Activated CD4-positive, alpha-beta T cell treated with anti-CD3 and anti-CD28 coated beads, Interleukin-2, amount 10 ng/mL, durations not matched to agents 7 days and 5 days (primary cell): ENCODE measurements at regions of chr17 and their contacts with region 1.

Region 1: DNA sequence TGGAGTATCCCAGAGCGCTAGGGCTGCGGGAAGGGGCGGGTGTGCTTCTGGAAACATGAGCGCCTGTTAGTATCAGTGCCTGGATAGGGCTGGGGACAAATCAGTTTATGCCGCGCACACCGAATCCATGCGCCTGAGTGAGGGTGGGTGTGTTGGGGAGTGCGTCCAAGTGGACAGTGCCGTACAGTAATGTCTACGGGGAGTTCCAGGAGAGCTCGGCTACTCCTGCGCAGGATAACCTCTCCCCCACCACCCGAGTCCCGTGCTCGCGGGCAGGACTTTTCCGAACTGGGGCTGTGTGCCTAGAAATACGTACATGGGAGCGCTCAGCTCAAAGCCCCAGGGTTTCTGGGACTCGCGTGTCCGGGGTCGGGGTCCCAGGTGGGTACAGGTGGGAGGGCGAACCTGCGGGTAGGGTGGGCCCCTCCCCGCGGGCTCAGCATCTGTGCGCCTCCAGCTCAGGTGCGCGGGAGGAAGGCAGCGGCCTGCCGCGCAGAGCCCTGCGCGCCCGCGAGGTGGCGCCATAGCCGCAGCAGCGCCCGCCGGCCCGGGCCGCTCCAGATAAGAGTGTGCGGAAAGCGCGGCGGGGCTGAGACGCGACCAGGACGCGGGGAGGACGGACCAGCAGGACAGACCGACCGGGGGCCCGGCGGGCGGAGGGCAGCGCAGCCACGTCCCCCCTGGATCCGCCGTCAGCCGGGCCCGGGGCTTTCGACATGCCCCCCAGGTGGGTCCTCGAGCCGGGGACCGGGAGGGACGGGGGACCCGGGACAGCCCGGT is at the start of gene HIC1:
- DNase-seq: peak; percentile 78
- H3K4me3 Mint-ChIP-seq: peak within 1 kb of the TSS; percentile 69
- H3K27ac Mint-ChIP-seq: peak within 1 kb of the TSS; percentile 82
- H3K4me1 Mint-ChIP-seq: peaks cover 24% of the 10 kb centered on the region
- H3K27me3 Mint-ChIP-seq: peaks cover 14% of the 10 kb centered on the region
- total RNA-seq, gene HIC1: 29.0 to 31.0 TPM

Region 2: GRCh38 chr17:2083613-2084128 is 29.0 kb after region 1 on chr17:
- CTCF ChIA-PET with region 1: interaction called, 24 read pairs
- POLR2A ChIA-PET with region 1: interaction called, 4 read pairs
- DNase-seq: no peak
- H3K4me3 Mint-ChIP-seq: no peak overlapping the region
- H3K27ac Mint-ChIP-seq: no peak overlapping the region
- H3K4me1 Mint-ChIP-seq: peaks cover 70% of the 10 kb centered on the region
- H3K27me3 Mint-ChIP-seq: no peaks in the 10 kb centered on the region

Region 3: GRCh38 chr17:2222901-2223616 is 168.4 kb after region 1 on chr17:
- CTCF ChIA-PET with region 1: interaction called, 12 read pairs
- POLR2A ChIA-PET with region 1: no interaction called
- DNase-seq: peak; percentile 44
- H3K4me3 Mint-ChIP-seq: no peak overlapping the region
- H3K27ac Mint-ChIP-seq: peak overlapping the region; percentile 5
- H3K4me1 Mint-ChIP-seq: peaks cover 45% of the 10 kb centered on the region
- H3K27me3 Mint-ChIP-seq: no peaks in the 10 kb centered on the region

Region 4: DNA sequence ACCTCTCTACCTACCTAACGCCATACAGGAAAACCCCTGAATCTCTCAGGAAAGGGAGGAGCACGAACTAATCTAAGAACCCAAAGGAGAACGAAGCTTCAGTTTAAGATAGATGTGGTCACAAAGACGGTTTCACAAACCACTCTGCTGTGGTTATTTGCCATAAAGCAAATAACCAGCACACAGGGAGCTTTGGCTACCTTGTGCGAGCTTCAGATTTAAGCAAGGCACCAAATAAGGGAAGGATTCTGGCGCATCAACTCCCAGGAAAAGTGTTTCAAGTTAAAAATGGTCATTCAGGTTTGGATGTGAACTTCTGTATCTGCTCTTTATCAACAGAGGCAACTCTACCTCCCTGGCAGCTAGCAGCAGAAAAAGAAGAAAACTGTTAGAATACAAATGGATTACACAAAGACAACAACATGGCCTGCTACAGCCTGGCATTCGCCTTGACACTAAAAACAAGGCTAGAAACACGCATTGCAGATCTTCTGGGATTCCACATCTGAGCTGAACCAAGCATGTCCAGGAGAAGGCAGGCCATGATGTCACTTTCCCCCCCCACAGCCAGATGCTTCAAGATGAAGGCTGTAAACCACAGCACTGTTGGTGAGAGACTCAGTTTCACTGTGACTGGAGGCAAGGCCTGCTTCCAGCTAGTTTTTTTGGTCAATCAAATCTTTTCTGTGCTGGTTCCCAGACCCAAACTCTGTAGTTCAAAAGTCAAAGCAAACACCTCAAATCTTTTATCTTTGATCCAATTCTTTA is 205.3 kb after region 1 on chr17:
- CTCF ChIA-PET with region 1: interaction called, 71 read pairs
- POLR2A ChIA-PET with region 1: interaction called, 9 read pairs
- DNase-seq: peak; percentile 85
- H3K4me3 Mint-ChIP-seq: peak overlapping the region; percentile 77
- H3K27ac Mint-ChIP-seq: peak overlapping the region; percentile 91
- H3K4me1 Mint-ChIP-seq: peaks cover 82% of the 10 kb centered on the region
- H3K27me3 Mint-ChIP-seq: no peaks in the 10 kb centered on the region

Region 5: GRCh38 chr17:2282297-2282873 is 227.7 kb after region 1 on chr17:
- CTCF ChIA-PET with region 1: interaction called, 82 read pairs
- POLR2A ChIA-PET with region 1: no interaction called
- DNase-seq: no peak
- H3K4me3 Mint-ChIP-seq: no peak overlapping the region
- H3K27ac Mint-ChIP-seq: peak overlapping the region; percentile 11
- H3K4me1 Mint-ChIP-seq: peaks cover 53% of the 10 kb centered on the region
- H3K27me3 Mint-ChIP-seq: no peaks in the 10 kb centered on the region